Transverse colon (tissue), 4 donors: ENCODE measurements at regions of chr14 and their contacts with region 1.

Region 1: GRCh38 chr14:22319526-22320361 is 269.3 kb downstream of the DAD1 start:
- DNase-seq: peak; percentile 45
- H3K4me3 ChIP-seq: no peak overlapping the region
- H3K27ac ChIP-seq: no peak overlapping the region
- H3K4me1 ChIP-seq: no peaks in the 10 kb centered on the region
- H3K27me3 ChIP-seq: no peaks in the 10 kb centered on the region
- CTCF ChIP-seq: peak; percentile 49 to 69 (median 58)
- EP300 ChIP-seq: no peak
- POLR2A ChIP-seq: no peak

Region 2: GRCh38 chr14:22276913-22277816 is 42.6 kb before region 1 on chr14:
- in situ Hi-C with region 1: no loop called
- intact Hi-C with region 1: no loop called
- DNase-seq: no peak
- H3K4me3 ChIP-seq: no peak overlapping the region
- H3K27ac ChIP-seq: no peak overlapping the region
- H3K4me1 ChIP-seq: no peaks in the 10 kb centered on the region
- H3K27me3 ChIP-seq: peaks cover 11% of the 10 kb centered on the region
- CTCF ChIP-seq: peak; percentile 36 to 57 (median 44)
- EP300 ChIP-seq: no peak
- POLR2A ChIP-seq: no peak

Region 3: GRCh38 chr14:22370084-22370847 is 50.5 kb after region 1 on chr14:
- in situ Hi-C with region 1: loop called in 2 of 4 experiments (anchors 5 to 10 kb)
- intact Hi-C with region 1: no loop called
- DNase-seq: no peak
- H3K4me3 ChIP-seq: no peak overlapping the region
- H3K27ac ChIP-seq: no peak overlapping the region
- H3K4me1 ChIP-seq: no peaks in the 10 kb centered on the region
- H3K27me3 ChIP-seq: no peaks in the 10 kb centered on the region
- CTCF ChIP-seq: no peak
- EP300 ChIP-seq: no peak
- POLR2A ChIP-seq: no peak

Region 4: GRCh38 chr14:22375321-22375930 is 55.7 kb after region 1 on chr14:
- in situ Hi-C with region 1: loop called in 2 of 4 experiments (anchors 5 to 10 kb)
- intact Hi-C with region 1: loop called (anchors 10 kb)
- DNase-seq: no peak
- H3K4me3 ChIP-seq: no peak overlapping the region
- H3K27ac ChIP-seq: no peak overlapping the region
- H3K4me1 ChIP-seq: peaks cover 0 to 4% (median 0%) of the 10 kb centered on the region in 4 donors
- H3K27me3 ChIP-seq: no peaks in the 10 kb centered on the region
- CTCF ChIP-seq: peak; percentile 40 to 57 (median 47)
- EP300 ChIP-seq: no peak
- POLR2A ChIP-seq: no peak

Region 5: GRCh38 chr14:22671622-22672021 is 351.9 kb after region 1 on chr14:
- in situ Hi-C with region 1: no loop called
- intact Hi-C with region 1: no loop called
- DNase-seq: no peak
- H3K4me3 ChIP-seq: no peak overlapping the region
- H3K27ac ChIP-seq: no peak overlapping the region
- H3K4me1 ChIP-seq: no peaks in the 10 kb centered on the region
- H3K27me3 ChIP-seq: no peaks in the 10 kb centered on the region
- CTCF ChIP-seq: no peak
- EP300 ChIP-seq: no peak
- POLR2A ChIP-seq: no peak